ENCODE measurements at regions of chr17 and their contacts with region 1.

Region 1: GRCh38 chr17:4997302-4998026 is at the starts of genes INCA1 and KIF1C:
- DNase-seq: peak; percentile 94
- ATAC-seq: peak; percentile 92
- H3K4me3 Mint-ChIP-seq: peak within 1 kb of the TSS; percentile 81
- H3K27ac Mint-ChIP-seq: peak within 1 kb of the TSS; percentile 84
- H3K4me1 Mint-ChIP-seq: peaks cover 18% of the 10 kb centered on the region
- H3K27me3 Mint-ChIP-seq: peaks cover 6% of the 10 kb centered on the region
- total RNA-seq, gene INCA1: 0.26 to 0.29 TPM
- total RNA-seq, gene KIF1C: 43.6 to 45.3 TPM

Region 2: GRCh38 chr17:4948931-4949320 is 48.5 kb before region 1 on chr17:
- CTCF ChIA-PET with region 1: no interaction called
- POLR2A ChIA-PET with region 1: interaction called, 10 read pairs
- DNase-seq: peak; percentile 84
- ATAC-seq: peak; percentile 46
- H3K4me3 Mint-ChIP-seq: peak overlapping the region; percentile 97
- H3K27ac Mint-ChIP-seq: peak overlapping the region; percentile 99
- H3K4me1 Mint-ChIP-seq: peaks cover 39% of the 10 kb centered on the region
- H3K27me3 Mint-ChIP-seq: no peaks in the 10 kb centered on the region

Region 3: DNA sequence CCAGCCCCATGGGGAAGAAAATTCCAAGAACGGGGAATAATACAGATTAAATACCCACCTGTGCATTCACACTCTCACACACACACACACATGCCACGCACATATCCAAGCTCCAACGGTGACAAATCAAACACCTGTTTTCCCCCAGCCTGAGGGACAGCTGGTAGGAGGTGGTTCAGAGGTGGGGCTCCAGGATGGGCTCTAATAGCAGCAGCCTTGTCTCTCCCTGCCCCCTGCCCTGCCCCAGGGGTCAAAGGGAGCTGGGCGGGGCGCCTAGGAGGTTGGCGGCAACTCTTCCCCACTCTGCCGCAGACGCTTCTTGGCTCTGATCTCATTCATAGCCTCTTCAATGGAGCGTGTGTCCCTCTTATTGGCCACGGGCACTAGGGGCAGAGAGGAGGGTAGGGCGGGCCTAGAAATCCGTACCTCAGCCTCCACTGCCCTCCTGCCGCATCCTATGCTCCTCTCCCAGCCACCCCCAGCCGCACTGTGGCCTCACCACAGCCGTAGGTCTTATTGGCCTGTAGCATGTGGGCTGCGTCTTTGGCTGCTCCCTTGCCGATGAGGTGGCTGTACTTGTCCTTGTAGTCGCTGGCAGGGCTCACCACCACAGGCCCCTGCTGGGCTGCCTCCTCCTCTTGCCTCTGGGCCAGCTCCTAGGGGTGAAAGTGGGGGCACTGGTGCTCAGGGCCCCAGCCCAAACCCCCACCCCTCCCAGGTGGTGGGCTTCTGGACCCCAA is 38.0 kb before region 1 on chr17:
- CTCF ChIA-PET with region 1: no interaction called
- POLR2A ChIA-PET with region 1: no interaction called
- DNase-seq: no peak
- ATAC-seq: no peak
- H3K4me3 Mint-ChIP-seq: no peak overlapping the region
- H3K27ac Mint-ChIP-seq: no peak overlapping the region
- H3K4me1 Mint-ChIP-seq: peaks cover 11% of the 10 kb centered on the region
- H3K27me3 Mint-ChIP-seq: no peaks in the 10 kb centered on the region

Region 4: DNA sequence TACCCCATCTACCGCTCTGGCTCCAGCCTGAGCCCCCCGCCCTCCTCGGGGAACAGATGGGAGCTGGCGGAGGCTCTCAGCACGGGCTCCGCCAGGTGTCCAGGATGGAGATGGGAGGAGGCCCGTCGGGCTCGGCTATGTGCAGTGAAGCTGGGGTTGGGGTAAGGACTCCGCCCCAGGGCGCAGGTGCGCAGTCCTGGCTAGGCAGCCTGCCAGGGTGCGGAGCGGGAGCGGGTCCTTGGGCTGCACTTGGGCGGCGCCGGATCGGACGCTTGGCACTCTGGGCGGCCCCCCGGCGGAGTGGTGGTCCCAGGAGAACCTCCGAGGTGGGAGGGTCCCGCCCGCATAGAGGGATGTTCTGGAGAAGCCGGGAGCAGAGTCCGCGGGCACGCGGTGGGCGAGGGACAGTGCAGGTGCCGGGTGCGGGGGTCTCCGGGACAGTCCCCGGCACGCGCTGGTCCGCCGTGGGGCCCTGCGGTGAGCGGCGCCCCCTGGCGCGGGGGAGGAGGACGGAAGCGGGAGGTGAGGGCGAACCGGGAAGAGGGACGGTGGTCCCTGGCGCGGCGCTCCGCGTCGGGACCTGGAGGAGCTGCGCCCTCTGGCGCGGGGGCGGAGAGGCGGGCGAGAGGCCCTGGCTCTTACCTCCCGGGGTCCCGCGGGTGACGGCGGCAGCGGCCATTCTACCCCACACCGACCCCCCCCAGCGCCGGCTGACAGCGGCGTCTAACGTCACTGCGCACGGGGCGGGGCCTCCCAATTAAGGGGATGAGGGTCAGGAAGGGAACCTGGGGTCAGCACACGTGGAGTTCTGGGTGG is 10.3 kb before region 1 on chr17 and contains the start of gene CAMTA2:
- CTCF ChIA-PET with region 1: interaction called, 13 read pairs
- POLR2A ChIA-PET with region 1: interaction called, 10 read pairs
- DNase-seq: peak; percentile 91
- ATAC-seq: peak; percentile 89
- H3K4me3 Mint-ChIP-seq: peak within 1 kb of the TSS; percentile 88
- H3K27ac Mint-ChIP-seq: peak within 1 kb of the TSS; percentile 92
- H3K4me1 Mint-ChIP-seq: peaks cover 41% of the 10 kb centered on the region
- H3K27me3 Mint-ChIP-seq: no peaks in the 10 kb centered on the region
- total RNA-seq, gene CAMTA2: 51.3 to 55.5 TPM

Region 5: DNA sequence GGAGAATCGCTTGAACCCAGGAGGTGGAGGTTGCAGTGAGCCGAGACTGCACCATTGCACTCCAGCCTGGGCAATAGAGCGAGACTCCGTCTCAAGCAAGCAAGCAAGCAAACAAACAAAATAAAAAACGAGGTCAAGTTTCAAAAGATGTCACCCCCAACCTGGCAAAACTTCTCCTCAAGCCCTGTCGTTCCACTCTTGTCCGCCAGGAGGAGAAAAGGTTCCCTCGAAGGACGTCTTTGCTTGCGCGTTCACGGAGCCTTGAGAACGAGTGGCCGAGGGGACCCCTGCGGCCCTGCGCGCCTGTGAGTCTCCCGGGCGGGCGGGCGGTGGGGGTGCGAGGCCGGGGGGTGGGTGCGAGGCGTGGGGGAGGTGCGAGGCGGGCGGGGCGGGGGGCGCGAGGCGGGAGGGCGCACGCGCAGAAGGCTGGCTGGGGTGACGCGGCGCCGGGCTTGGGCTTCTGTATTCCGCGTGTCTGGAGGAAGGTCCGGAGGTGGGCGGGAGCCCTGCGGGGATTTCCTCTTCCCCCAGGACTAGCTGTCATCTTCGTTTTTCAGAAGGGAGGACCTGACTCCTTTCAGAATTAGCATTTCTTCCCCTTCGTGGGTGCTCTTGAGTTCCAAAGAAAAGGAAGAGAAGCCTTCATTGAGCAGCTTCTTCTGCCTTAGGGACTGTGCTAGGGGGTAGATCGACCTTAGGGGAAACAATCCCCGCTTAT is 34.1 kb after region 1 on chr17:
- CTCF ChIA-PET with region 1: interaction called, 11 read pairs
- POLR2A ChIA-PET with region 1: no interaction called
- DNase-seq: peak; percentile 89
- ATAC-seq: peak; percentile 80
- H3K4me3 Mint-ChIP-seq: peak overlapping the region; percentile 81
- H3K27ac Mint-ChIP-seq: peak overlapping the region; percentile 86
- H3K4me1 Mint-ChIP-seq: peaks cover 17% of the 10 kb centered on the region
- H3K27me3 Mint-ChIP-seq: peaks cover 3% of the 10 kb centered on the region

Region 6: DNA sequence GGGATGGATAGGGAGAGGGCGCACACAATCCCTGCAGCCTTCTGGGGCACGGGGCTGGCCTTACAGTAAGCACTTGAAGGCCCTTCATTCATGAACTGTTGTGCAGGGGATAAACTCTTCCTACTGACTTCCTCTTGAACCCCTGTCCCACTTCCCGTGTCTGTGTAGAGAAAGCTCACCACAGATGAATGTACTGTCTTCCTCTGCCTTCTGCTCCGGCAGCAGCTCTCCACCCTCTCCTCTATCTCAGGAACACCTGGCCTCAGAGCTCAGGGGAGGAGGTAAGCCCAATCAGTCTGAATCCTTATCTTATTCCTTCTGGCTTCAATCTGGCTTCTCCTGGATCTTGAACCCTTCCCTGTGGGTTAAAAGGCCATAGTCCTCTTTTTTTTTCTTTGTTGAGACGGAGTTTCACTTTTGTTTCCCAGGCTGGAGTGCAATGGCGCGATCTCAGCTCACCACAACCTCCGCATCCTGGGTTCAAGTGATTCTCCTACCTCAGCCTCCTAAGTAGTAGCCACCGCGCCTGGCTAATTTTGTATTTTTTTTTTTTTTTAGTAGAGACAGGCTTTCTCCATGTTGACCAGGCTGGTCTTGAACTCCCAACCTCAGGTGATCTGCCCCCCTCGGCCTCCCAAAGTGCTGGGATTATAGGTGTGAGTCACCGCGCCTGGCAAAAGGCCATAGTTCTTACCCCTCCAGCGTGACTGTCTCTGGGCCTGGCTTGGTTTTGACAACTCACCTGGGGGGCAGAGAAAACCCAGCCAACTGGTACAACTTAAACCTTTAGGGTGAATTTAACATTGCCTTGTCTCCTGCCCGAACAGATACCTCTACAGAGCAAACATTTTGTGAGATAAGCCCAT is 44.9 kb after region 1 on chr17:
- CTCF ChIA-PET with region 1: no interaction called
- POLR2A ChIA-PET with region 1: no interaction called
- DNase-seq: peak; percentile 62
- ATAC-seq: peak; percentile 75
- H3K4me3 Mint-ChIP-seq: peak overlapping the region; percentile 93
- H3K27ac Mint-ChIP-seq: peak overlapping the region; percentile 98
- H3K4me1 Mint-ChIP-seq: peaks cover 48% of the 10 kb centered on the region
- H3K27me3 Mint-ChIP-seq: no peaks in the 10 kb centered on the region